CD8-positive, alpha-beta T cell (primary cell): ENCODE measurements at regions of chr1 and their contacts with region 1.

Region 1: DNA sequence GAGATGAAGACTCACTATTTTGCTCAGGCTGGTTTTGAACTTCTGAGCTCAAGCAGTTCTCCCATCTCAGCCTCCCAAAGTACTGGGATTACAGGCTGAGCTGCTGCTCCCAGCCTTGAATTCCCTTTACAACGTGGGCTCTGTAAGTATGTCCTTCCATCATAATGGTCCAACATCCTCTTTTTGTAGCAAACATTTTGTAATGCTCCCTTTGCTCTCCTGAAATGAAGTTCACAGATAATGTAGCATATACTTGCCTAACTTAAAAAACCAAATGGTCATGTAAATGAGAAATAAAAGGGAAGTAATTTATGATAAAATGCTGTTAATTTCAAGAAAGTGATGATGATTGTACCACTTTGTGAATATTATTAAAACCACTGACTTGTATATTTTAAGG is 30.5 kb upstream of the THEM4 start:
- DNase-seq: no peak
- ATAC-seq: no peak
- H3K4me3 ChIP-seq: no peak overlapping the region
- H3K4me3 Mint-ChIP-seq: no peak overlapping the region
- H3K27ac ChIP-seq: no peak overlapping the region
- H3K27ac Mint-ChIP-seq: no peak overlapping the region
- H3K4me1 ChIP-seq: peaks cover 2% of the 10 kb centered on the region
- H3K4me1 Mint-ChIP-seq: peaks cover 9% of the 10 kb centered on the region
- H3K27me3 ChIP-seq: no peaks in the 10 kb centered on the region
- H3K27me3 Mint-ChIP-seq: no peaks in the 10 kb centered on the region
- CTCF ChIP-seq: no peak

Region 2: GRCh38 chr1:151858030-151858691 is 81.6 kb before region 1 on chr1:
- CTCF ChIA-PET with region 1: no interaction called
- POLR2A ChIA-PET with region 1: no interaction called
- intact Hi-C with region 1: no loop called
- DNase-seq: peak in 1 of 9 experiments; percentile 23
- ATAC-seq: no peak
- H3K4me3 ChIP-seq: no peak overlapping the region
- H3K4me3 Mint-ChIP-seq: no peak overlapping the region
- H3K27ac ChIP-seq: no peak overlapping the region
- H3K27ac Mint-ChIP-seq: no peak overlapping the region
- H3K4me1 ChIP-seq: no peaks in the 10 kb centered on the region
- H3K4me1 Mint-ChIP-seq: no peaks in the 10 kb centered on the region
- H3K27me3 ChIP-seq: no peaks in the 10 kb centered on the region
- H3K27me3 Mint-ChIP-seq: no peaks in the 10 kb centered on the region
- CTCF ChIP-seq: no peak

Region 3: GRCh38 chr1:151920149-151920548 is 19.6 kb before region 1 on chr1:
- CTCF ChIA-PET with region 1: no interaction called
- POLR2A ChIA-PET with region 1: interaction called, 3 read pairs
- intact Hi-C with region 1: loop called in 1 of 2 experiments (anchors 2 kb)
- DNase-seq: no peak
- ATAC-seq: no peak
- H3K4me3 ChIP-seq: no peak overlapping the region
- H3K4me3 Mint-ChIP-seq: no peak overlapping the region
- H3K27ac ChIP-seq: no peak overlapping the region
- H3K27ac Mint-ChIP-seq: no peak overlapping the region
- H3K4me1 ChIP-seq: peaks cover 3% of the 10 kb centered on the region
- H3K4me1 Mint-ChIP-seq: peaks cover 3% of the 10 kb centered on the region
- H3K27me3 ChIP-seq: no peaks in the 10 kb centered on the region
- H3K27me3 Mint-ChIP-seq: no peaks in the 10 kb centered on the region
- CTCF ChIP-seq: no peak